Activated B cell treated with CpG ODN at 0.5 μM for 24 hours (primary cell): ENCODE measurements at regions of chr6 and their contacts with region 1.

Region 1: GRCh38 chr6:43308101-43308989 is at the start of gene CRIP3:
- DNase-seq: peak; percentile 58
- ATAC-seq: peak; percentile 75
- H3K4me3 Mint-ChIP-seq: peak within 1 kb of the TSS; percentile 90
- H3K27ac Mint-ChIP-seq: peak within 1 kb of the TSS; percentile 69
- H3K4me1 Mint-ChIP-seq: peaks cover 53% of the 10 kb centered on the region
- H3K27me3 Mint-ChIP-seq: no peaks in the 10 kb centered on the region
- CTCF ChIP-seq: no peak
- total RNA-seq, gene CRIP3: 42.2 and 49.9 TPM in 2 replicates

Region 2: GRCh38 chr6:43193939-43194338 is 114.4 kb before region 1 on chr6:
- CTCF ChIA-PET with region 1: no interaction called
- POLR2A ChIA-PET with region 1: no interaction called
- intact Hi-C with region 1: no loop called
- DNase-seq: no peak
- ATAC-seq: no peak
- H3K4me3 Mint-ChIP-seq: no peak overlapping the region
- H3K27ac Mint-ChIP-seq: no peak overlapping the region
- H3K4me1 Mint-ChIP-seq: peaks cover 3% of the 10 kb centered on the region
- H3K27me3 Mint-ChIP-seq: no peaks in the 10 kb centered on the region
- CTCF ChIP-seq: no peak

Region 3: DNA sequence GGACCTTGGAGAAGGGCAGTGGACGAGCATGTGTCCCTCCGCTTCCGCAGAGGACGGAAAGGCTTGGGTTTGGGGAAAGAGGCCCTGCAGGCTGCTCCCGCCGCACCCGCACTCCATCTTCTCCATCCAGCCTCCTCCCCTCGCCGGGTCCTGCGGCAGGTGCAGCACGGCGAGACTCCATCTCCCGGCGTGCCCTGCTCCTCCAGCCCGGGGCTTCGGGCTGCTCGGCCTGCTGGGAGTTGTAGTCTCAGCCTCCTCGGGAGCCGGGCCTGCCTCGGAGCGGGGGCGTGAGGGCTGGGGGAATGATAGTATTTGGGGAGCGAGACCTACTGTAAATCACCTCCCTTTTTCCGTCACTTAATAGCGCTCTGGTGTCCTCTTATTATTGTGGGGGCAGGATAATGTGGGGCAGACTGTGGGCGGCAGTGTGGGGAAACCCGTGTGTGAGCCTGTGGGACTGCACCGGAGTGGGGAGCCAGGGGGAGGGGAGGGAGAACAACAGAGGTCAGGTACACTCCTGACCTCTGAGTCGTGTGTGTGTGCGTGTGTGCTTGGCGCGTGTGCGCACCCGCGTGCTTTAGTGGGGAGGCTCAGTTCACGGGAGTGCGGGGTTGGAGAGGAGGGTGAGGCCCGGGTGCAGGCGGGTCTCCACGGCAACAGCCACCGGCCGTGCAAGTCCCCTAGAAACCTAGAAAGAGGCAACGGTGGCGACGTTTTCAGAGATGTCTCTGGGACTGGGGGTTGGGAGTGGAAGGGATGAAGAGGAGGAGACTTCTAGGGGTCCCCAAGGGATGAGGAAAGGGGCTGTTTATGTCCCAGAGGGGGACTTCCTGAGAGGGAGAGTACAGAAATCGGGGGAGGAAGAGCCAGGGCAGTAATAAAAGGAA is 61.0 kb before region 1 on chr6:
- CTCF ChIA-PET with region 1: interaction called, 3 read pairs
- POLR2A ChIA-PET with region 1: interaction called, 10 read pairs
- intact Hi-C with region 1: no loop called
- DNase-seq: peak; percentile 73
- ATAC-seq: peak; percentile 96
- H3K4me3 Mint-ChIP-seq: no peak overlapping the region
- H3K27ac Mint-ChIP-seq: peak overlapping the region; percentile 76
- H3K4me1 Mint-ChIP-seq: peaks cover 29% of the 10 kb centered on the region
- H3K27me3 Mint-ChIP-seq: peaks cover 17% of the 10 kb centered on the region
- CTCF ChIP-seq: no peak

Region 4: GRCh38 chr6:43269273-43270007 is 38.9 kb before region 1 on chr6:
- CTCF ChIA-PET with region 1: interaction called, 9 read pairs
- POLR2A ChIA-PET with region 1: interaction called, 7 read pairs
- intact Hi-C with region 1: loop called (anchors 2 kb)
- DNase-seq: peak; percentile 41
- ATAC-seq: peak; percentile 9
- H3K4me3 Mint-ChIP-seq: peak overlapping the region; percentile 74
- H3K27ac Mint-ChIP-seq: peak overlapping the region; percentile 59
- H3K4me1 Mint-ChIP-seq: peaks cover 36% of the 10 kb centered on the region
- H3K27me3 Mint-ChIP-seq: peaks cover 3% of the 10 kb centered on the region
- CTCF ChIP-seq: no peak

Region 5: DNA sequence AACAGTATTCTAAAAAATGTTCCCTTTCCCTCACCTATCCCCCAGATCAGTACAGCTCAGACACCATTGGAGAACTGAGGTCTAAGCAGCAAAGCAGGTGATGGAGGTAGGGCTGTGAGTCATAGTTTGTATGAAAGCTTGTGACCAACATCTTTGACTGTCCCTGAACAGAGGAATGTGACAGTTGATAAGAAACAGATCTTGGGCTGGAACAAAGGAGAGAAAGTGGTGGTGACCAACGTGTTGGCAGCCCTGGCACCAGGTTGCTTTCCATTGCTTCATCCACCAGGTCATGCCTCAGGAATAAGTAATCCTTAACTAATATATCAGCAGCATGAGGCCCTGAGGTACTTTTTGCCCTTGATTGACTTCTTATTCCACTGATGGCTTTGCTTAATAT is 20.2 kb after region 1 on chr6:
- CTCF ChIA-PET with region 1: interaction called, 52 read pairs
- POLR2A ChIA-PET with region 1: interaction called, 8 read pairs
- intact Hi-C with region 1: no loop called
- DNase-seq: no peak
- ATAC-seq: no peak
- H3K4me3 Mint-ChIP-seq: no peak overlapping the region
- H3K27ac Mint-ChIP-seq: peak overlapping the region; percentile 31
- H3K4me1 Mint-ChIP-seq: peaks cover 32% of the 10 kb centered on the region
- H3K27me3 Mint-ChIP-seq: no peaks in the 10 kb centered on the region
- CTCF ChIP-seq: no peak

Region 6: DNA sequence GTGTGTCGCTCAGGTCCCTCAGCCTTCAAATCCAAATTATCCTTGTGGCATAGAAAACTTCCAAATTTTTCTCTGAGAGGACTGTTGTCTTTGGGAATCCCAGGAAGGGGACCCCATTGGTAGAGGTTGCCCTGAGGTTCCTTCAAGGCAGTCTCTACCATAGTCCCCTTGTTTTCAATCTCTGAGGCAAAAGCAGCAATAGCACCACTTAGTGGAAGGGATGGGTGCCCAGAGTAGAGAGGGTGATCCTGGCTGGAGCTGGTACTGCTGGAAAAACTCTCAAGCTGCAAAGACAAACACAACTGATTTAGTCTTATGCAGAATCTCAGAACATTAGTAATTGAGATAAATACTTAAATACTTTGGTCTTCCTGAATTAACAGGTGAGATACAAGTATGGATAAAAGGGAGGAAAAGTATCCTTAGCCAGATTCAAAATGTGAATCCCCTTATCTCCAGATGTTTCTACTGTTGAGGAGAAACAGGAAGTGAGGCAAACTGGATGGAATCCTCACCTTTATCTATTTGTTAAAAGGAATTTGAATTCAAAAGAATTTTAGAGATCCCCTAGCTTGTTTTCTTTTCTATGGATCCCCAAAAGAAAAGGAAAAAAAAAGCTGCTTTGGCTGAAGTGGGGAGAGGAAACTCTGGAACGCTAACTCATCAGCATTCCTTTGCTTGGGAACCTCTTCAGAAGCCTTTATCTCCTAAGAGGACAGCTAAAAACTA is 47.7 kb after region 1 on chr6:
- CTCF ChIA-PET with region 1: interaction called, 21 read pairs
- POLR2A ChIA-PET with region 1: interaction called, 4 read pairs
- intact Hi-C with region 1: loop called (anchors 1 kb)
- DNase-seq: no peak
- ATAC-seq: peak; percentile 65
- H3K4me3 Mint-ChIP-seq: no peak overlapping the region
- H3K27ac Mint-ChIP-seq: no peak overlapping the region
- H3K4me1 Mint-ChIP-seq: peaks cover 28% of the 10 kb centered on the region
- H3K27me3 Mint-ChIP-seq: no peaks in the 10 kb centered on the region
- CTCF ChIP-seq: no peak

Region 7: GRCh38 chr6:43369174-43370022 is 61.1 kb after region 1 on chr6 and contains the start of gene ZNF318:
- CTCF ChIA-PET with region 1: interaction called, 4 read pairs
- POLR2A ChIA-PET with region 1: interaction called, 6 read pairs
- intact Hi-C with region 1: loop called (anchors 2 kb)
- DNase-seq: peak; percentile 92
- ATAC-seq: peak; percentile 90
- H3K4me3 Mint-ChIP-seq: peak within 1 kb of the TSS; percentile 95
- H3K27ac Mint-ChIP-seq: peak within 1 kb of the TSS; percentile 94
- H3K4me1 Mint-ChIP-seq: peaks cover 79% of the 10 kb centered on the region
- H3K27me3 Mint-ChIP-seq: no peaks in the 10 kb centered on the region
- CTCF ChIP-seq: no peak
- total RNA-seq, gene ZNF318: 135 and 159 TPM in 2 replicates

Region 8: DNA sequence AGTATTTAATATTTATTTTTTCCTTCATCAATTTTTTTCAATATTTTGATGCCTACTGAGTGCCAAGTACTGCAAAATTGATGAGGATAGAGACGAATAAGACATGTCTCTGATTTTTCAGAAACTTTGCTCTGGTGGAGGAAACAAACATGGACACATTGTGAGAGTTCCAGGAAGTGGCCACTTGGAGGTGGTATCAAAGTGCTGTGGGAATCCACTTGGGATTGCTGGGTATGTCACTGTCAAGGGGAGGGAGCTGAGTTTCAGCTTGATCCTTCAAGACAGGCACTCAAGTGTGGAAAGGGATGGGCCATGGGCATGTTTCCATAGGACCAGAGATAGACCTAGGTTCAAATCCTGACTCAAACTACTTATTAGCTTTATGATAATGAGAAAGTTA is 94.5 kb after region 1 on chr6:
- CTCF ChIA-PET with region 1: interaction called, 24 read pairs
- POLR2A ChIA-PET with region 1: interaction called, 7 read pairs
- intact Hi-C with region 1: loop called (anchors 1 kb)
- DNase-seq: no peak
- ATAC-seq: no peak
- H3K4me3 Mint-ChIP-seq: no peak overlapping the region
- H3K27ac Mint-ChIP-seq: no peak overlapping the region
- H3K4me1 Mint-ChIP-seq: peaks cover 4% of the 10 kb centered on the region
- H3K27me3 Mint-ChIP-seq: peaks cover 23% of the 10 kb centered on the region
- CTCF ChIP-seq: no peak